ENCODE measurements at regions of chr17 and their contacts with region 1.

Region 1: GRCh38 chr17:27879987-27880608 is 13.1 kb downstream of the LYRM9 start:
- DNase-seq: peak; percentile 53 to 67
- H3K4me3 ChIP-seq: no peak overlapping the region
- H3K27ac ChIP-seq: no peak overlapping the region
- H3K4me1 ChIP-seq: no peaks in the 10 kb centered on the region
- H3K27me3 ChIP-seq: no peaks in the 10 kb centered on the region
- CTCF ChIP-seq: peak; percentile 88

Region 2: GRCh38 chr17:27760069-27760885 is 119.8 kb before region 1 on chr17:
- CTCF ChIA-PET with region 1: interaction called, 9 read pairs
- POLR2A ChIA-PET with region 1: no interaction called
- intact Hi-C with region 1: loop called (anchors 1 kb)
- DNase-seq: peak in 1 of 2 experiments; percentile 63
- H3K4me3 ChIP-seq: no peak overlapping the region
- H3K27ac ChIP-seq: no peak overlapping the region
- H3K4me1 ChIP-seq: no peaks in the 10 kb centered on the region
- H3K27me3 ChIP-seq: peaks cover 35% of the 10 kb centered on the region
- CTCF ChIP-seq: peak; percentile 95

Region 3: GRCh38 chr17:27944546-27945332 is 64.6 kb after region 1 on chr17:
- CTCF ChIA-PET with region 1: no interaction called
- POLR2A ChIA-PET with region 1: no interaction called
- intact Hi-C with region 1: no loop called
- DNase-seq: no peak
- H3K4me3 ChIP-seq: no peak overlapping the region
- H3K27ac ChIP-seq: no peak overlapping the region
- H3K4me1 ChIP-seq: no peaks in the 10 kb centered on the region
- H3K27me3 ChIP-seq: peaks cover 11% of the 10 kb centered on the region; the same call in 1 of the 2 replicates
- CTCF ChIP-seq: no peak